ENCODE measurements at regions of chr6 and their contacts with region 1.

Region 1: DNA sequence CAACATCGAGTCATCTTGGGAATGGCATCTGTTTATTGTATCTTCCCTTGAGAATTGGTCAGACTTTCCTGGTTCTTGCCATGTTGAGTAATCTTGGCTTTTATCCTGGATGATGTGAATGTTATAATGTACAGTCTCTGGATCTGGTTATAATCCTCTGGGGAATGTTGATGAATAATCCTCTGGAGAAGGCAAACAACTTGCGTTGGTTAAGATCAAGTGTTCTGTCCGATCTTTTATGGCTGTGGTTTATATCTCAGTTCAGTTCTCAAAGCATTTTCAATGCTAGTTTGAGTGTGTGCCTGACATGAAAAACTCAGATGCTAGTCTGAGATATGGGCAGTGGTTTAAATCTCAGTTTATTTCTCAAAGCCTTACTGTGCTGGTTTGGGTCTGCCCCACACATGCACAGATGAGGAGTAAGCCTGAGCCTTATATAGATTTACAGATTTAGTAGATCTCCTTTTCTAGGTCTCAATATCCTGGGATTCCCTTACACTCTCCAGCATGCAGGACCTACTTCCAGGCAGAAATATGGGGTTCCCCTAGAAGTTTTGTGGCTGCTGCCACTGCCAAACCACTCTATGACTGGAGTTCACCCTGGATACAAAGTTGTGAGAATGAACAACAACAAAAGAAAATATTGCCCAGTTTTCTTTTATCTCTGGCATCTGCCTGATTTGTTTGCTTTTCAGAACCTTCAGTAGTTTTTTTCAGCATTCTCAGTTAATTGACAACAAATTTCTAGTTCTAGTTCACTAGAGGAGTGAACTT is 191.8 kb upstream of the MAN1A1 start:
- DNase-seq: no peak
- H3K4me3 ChIP-seq: no peak overlapping the region
- H3K27ac ChIP-seq: no peak overlapping the region
- H3K4me1 ChIP-seq: no peaks in the 10 kb centered on the region
- H3K27me3 ChIP-seq: no peaks in the 10 kb centered on the region
- CTCF ChIP-seq: no peak
- POLR2A ChIP-seq: no peak

Region 2: DNA sequence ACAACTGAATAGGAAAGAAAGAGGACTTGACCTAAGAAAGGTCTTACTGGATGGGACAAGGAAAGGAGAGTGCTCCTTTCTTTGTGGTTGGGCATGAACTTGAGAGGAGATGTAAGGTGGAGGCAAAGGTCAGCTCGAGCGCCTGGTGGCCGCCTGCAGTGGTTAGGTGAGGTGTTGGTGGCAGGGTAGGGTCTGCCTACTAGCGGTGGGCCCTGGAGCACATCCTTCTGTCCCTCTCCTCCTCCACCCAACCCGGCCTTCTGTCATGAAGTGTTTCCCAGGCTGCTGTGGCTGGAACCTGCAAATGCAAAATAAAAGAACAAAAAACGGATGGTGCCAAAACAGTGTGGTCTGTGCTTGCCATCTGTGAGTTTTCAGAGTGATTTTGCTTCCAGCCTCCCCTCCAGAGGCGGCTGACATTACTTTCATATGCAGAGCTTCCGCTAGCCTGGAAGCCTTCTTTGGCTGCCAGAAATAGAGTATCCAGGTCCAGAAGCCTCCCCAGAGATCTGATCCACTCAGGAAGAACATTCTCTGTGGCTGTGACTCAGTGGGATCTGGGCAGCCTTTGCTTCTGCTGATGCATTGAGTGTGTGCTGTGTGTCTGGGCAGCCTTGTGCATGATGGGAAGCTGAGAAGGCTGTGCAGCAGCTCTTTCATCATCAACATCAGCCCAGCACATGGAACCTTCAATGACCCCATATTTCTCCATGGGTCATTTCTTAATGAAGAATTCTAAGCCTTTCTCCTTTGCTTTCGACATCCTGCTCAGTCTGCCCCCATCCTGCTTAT is 383.1 kb before region 1 on chr6:
- intact Hi-C with region 1: loop called (anchors 10 kb)
- DNase-seq: no peak
- H3K4me3 ChIP-seq: no peak overlapping the region
- H3K27ac ChIP-seq: no peak overlapping the region
- H3K4me1 ChIP-seq: no peaks in the 10 kb centered on the region
- H3K27me3 ChIP-seq: no peaks in the 10 kb centered on the region
- CTCF ChIP-seq: no peak
- POLR2A ChIP-seq: no peak

Region 3: GRCh38 chr6:119957195-119957594 is 415.9 kb after region 1 on chr6:
- intact Hi-C with region 1: no loop called
- DNase-seq: no peak
- H3K4me3 ChIP-seq: no peak overlapping the region
- H3K27ac ChIP-seq: no peak overlapping the region
- H3K4me1 ChIP-seq: no peaks in the 10 kb centered on the region
- H3K27me3 ChIP-seq: no peaks in the 10 kb centered on the region
- CTCF ChIP-seq: no peak
- POLR2A ChIP-seq: no peak